ENCODE measurements at regions of chr17 and their contacts with region 1.

Region 1: GRCh38 chr17:64129764-64130558 is at the start of gene ERN1:
- DNase-seq: peak; percentile 91
- H3K4me3 ChIP-seq: peak within 1 kb of the TSS; percentile 92
- H3K27ac ChIP-seq: peak within 1 kb of the TSS; percentile 61
- H3K4me1 ChIP-seq: peaks cover 63% of the 10 kb centered on the region
- CTCF ChIP-seq: no peak
- total RNA-seq, gene ERN1: 14.7 and 22.0 TPM in 2 replicates

Region 2: DNA sequence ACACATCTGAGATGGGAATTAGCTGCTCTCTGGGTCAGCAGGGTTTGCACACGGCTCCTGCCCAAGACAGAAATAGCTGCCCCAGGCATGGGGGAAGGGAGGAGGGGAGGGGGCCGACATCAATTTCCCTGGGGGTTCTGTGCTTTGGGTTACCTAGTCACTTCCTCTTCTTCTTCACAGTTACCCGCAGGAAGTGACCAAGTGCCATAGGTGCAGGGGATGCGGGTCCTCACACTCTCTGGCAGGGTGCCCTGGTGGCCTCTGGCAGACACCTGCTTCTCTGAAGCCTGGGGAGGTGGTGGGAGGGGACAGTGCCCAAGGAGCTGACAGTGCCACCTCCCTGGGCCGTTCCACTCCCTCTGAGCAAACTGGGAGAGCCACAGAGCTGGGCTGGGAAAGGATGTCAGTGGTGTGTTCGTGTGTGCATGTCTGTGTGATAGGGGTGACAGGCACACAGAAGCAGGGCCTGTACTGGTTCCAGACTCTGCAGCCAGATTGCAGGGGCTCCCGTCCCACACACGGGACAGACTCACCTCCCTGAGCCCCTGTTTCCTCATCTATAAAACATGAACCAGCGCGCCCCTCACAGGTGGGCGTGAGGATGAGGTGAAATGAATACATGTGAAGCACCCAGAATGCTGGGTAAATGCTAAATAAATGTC is 175.4 kb before region 1 on chr17:
- CTCF ChIA-PET with region 1: no interaction called
- POLR2A ChIA-PET with region 1: no interaction called
- intact Hi-C with region 1: loop called (anchors 2 kb)
- DNase-seq: peak; percentile 91
- H3K4me3 ChIP-seq: peak overlapping the region; percentile 44
- H3K27ac ChIP-seq: peak overlapping the region; percentile 89
- H3K4me1 ChIP-seq: peaks cover 44% of the 10 kb centered on the region
- CTCF ChIP-seq: peak; percentile 73

Region 3: GRCh38 chr17:64025732-64026294 is 104.1 kb before region 1 on chr17:
- CTCF ChIA-PET with region 1: interaction called, 46 read pairs
- POLR2A ChIA-PET with region 1: interaction called, 43 read pairs
- intact Hi-C with region 1: loop called (anchors 1 kb)
- DNase-seq: peak; percentile 91
- H3K4me3 ChIP-seq: peak overlapping the region; percentile 20
- H3K27ac ChIP-seq: peak overlapping the region; percentile 20
- H3K4me1 ChIP-seq: peaks cover 73% of the 10 kb centered on the region
- CTCF ChIP-seq: peak; percentile 98

Region 4: DNA sequence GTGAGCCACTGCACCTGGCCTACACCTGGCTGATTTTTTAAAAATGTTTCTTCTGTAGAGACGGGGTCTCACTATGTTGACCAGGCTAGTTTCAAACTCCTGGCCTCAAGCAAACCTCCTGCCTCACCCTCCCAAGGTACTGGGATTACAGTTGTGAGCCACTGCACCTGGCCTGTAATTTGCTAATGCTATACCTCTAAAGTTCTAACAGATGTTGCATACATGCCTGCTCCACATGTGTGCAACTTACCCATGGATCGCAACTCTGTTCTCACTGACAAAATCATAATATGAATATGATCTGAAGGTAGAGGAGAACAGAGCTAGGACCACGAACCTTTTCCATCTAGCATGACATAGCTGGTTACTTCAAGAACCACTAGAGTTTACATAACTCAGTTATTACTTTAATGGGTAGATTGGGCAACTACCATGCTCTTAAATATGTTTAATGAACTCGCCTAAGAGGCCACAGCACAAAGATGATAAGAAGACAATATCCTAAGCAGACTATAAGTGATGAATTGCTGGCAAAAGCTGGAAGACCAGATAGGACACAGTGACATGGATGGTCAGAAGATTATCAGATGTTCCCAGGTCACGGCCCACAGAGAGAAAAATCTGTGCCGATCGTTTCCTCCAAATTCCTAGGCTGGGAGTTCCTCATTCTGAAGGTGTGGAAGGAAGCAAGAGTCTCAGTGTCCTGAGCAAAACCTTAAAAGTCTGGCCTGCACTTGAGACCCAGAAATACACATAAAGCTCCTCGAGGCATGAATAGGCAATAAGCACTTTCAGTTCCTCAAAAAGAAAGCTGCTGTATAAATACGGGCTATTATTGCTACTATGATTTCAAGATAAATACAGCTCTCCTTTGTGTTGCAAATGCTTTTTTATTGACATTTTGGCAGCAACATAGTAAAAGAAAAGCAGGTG is 55.9 kb before region 1 on chr17:
- CTCF ChIA-PET with region 1: interaction called, 6 read pairs
- POLR2A ChIA-PET with region 1: interaction called, 48 read pairs
- intact Hi-C with region 1: loop called (anchors 1 kb)
- DNase-seq: peak; percentile 95
- H3K4me3 ChIP-seq: peak overlapping the region; percentile 40
- H3K27ac ChIP-seq: peak overlapping the region; percentile 93
- H3K4me1 ChIP-seq: peaks cover 69% of the 10 kb centered on the region
- CTCF ChIP-seq: no peak

Region 5: DNA sequence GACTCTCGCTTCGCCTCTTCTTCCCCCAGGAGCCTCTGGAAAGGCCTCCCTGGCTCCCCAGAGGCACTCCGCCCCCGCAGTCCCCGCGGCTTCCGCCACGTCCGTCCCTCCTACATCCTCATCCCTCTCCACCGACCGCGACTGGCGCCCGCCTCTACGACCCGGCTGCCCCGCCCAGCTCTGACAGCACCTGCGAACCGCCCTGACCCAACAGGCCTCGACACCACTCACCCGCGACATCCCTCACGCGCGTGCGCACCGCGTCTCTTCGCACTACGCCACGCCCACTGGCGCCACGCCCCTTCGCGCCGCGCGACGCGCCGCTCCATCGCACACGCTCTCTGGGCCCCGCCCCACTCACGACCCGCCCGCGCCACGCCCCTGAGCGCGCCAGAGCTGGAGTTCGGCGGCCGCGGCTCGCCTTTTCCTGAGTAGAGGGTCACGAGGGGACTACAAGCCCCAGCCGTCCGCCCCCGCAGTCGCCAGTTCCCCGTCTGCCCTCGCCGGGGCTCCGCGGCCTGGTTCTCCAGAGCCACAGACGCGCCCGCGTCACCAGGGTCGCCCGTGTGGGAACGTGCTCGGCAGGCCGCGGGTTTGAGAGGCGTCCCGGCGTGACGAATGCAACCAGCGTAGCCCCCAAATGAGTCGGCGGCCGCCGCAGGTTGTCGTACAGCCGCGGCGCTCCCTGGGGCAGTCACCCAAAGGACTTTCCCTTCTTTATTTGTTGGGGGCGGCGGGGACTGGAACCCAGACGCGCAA is 845.5 kb after region 1 on chr17:
- CTCF ChIA-PET with region 1: no interaction called
- POLR2A ChIA-PET with region 1: no interaction called
- intact Hi-C with region 1: no loop called
- DNase-seq: peak; percentile 97
- H3K4me3 ChIP-seq: peak overlapping the region; percentile 77
- H3K27ac ChIP-seq: peak overlapping the region; percentile 99
- H3K4me1 ChIP-seq: peaks cover 87% of the 10 kb centered on the region
- CTCF ChIP-seq: no peak

Measured in OCI-LY7 (cell line).